A673 (cell line): ENCODE measurements at regions of chr10 and their contacts with region 1.

Region 1: DNA sequence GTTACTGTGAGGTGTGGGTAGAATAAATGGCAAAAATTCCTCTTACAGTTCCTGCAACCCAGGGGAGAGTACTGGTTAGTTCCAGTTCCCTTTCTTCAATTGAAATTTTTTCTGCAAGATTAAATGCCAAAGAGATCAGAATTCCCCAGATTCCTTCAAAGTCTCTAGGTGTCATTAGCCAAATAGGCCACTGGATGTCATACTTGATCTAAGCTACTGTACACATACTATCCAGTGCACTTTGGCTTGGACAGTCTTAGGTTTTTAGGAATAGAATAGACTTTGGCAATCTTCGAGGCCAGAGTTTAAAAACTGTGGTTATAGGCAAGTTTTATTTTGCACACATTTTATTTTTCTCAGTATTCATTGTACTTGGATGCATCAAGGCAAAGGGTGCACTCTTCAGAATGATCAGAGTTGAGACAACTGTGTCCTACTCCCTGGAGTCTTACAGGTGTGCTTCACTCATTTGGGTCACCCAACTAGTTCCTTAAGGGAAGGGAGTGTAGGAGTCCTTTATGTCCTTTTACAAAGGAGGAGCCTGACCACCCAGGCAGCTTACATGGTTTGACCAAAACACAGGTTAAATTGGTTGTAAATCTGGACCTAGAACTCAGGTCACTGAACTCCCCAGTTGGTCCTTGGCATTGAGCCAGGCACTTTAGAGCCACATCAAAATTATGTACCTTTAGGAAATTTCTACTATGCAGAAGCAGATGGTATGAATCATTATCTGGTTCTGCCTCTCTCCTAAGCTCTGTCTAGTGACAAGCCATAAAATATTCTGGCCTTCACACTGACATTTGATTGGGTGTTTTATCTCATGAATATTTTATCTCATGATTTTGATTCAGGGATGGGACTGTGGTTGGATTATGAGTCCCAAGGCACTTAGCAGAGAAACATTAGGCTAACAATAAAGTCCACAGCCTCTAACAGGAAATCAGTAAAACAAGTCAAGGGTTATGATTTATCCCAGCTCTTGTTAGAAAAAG is 49.5 kb downstream of the ASAH2B start:
- DNase-seq: peak; percentile 80
- H3K4me3 ChIP-seq: no peak overlapping the region
- H3K27ac ChIP-seq: no peak overlapping the region
- H3K4me1 ChIP-seq: peaks cover 8% of the 10 kb centered on the region
- H3K27me3 ChIP-seq: peaks cover 4% of the 10 kb centered on the region
- CTCF ChIP-seq: peak; percentile 59

Region 2: GRCh38 chr10:50885097-50885859 is 96.0 kb after region 1 on chr10 and contains the start of gene A1CF:
- CTCF ChIA-PET with region 1: no interaction called
- POLR2A ChIA-PET with region 1: no interaction called
- intact Hi-C with region 1: loop called (anchors 2 kb)
- DNase-seq: no peak
- H3K4me3 ChIP-seq: no peak within 1 kb of the TSS
- H3K27ac ChIP-seq: no peak within 1 kb of the TSS
- H3K4me1 ChIP-seq: no peaks in the 10 kb centered on the region
- H3K27me3 ChIP-seq: peaks cover 37% of the 10 kb centered on the region
- CTCF ChIP-seq: no peak
- total RNA-seq, gene A1CF: not detected in 2 replicates

Region 3: GRCh38 chr10:51001587-51001986 is 212.3 kb after region 1 on chr10:
- CTCF ChIA-PET with region 1: no interaction called
- POLR2A ChIA-PET with region 1: no interaction called
- intact Hi-C with region 1: loop called (anchors 5 kb)
- DNase-seq: peak; percentile 43
- H3K4me3 ChIP-seq: no peak overlapping the region
- H3K27ac ChIP-seq: no peak overlapping the region
- H3K4me1 ChIP-seq: no peaks in the 10 kb centered on the region
- H3K27me3 ChIP-seq: peaks cover 35% of the 10 kb centered on the region
- CTCF ChIP-seq: peak; percentile 66

Region 4: GRCh38 chr10:51366044-51366443 is 576.8 kb after region 1 on chr10:
- CTCF ChIA-PET with region 1: no interaction called
- POLR2A ChIA-PET with region 1: no interaction called
- intact Hi-C with region 1: no loop called
- DNase-seq: no peak
- H3K4me3 ChIP-seq: no peak overlapping the region
- H3K27ac ChIP-seq: no peak overlapping the region
- H3K4me1 ChIP-seq: no peaks in the 10 kb centered on the region
- H3K27me3 ChIP-seq: no peaks in the 10 kb centered on the region
- CTCF ChIP-seq: no peak

Region 5: GRCh38 chr10:51422311-51423120 is 633.3 kb after region 1 on chr10:
- CTCF ChIA-PET with region 1: no interaction called
- POLR2A ChIA-PET with region 1: no interaction called
- intact Hi-C with region 1: loop called (anchors 10 kb)
- DNase-seq: peak; percentile 61
- H3K4me3 ChIP-seq: no peak overlapping the region
- H3K27ac ChIP-seq: no peak overlapping the region
- H3K4me1 ChIP-seq: no peaks in the 10 kb centered on the region
- H3K27me3 ChIP-seq: no peaks in the 10 kb centered on the region
- CTCF ChIP-seq: peak; percentile 84